CD4-positive, alpha-beta memory T cell (primary cell): ENCODE measurements at regions of chr12 and their contacts with region 1.

Region 1: DNA sequence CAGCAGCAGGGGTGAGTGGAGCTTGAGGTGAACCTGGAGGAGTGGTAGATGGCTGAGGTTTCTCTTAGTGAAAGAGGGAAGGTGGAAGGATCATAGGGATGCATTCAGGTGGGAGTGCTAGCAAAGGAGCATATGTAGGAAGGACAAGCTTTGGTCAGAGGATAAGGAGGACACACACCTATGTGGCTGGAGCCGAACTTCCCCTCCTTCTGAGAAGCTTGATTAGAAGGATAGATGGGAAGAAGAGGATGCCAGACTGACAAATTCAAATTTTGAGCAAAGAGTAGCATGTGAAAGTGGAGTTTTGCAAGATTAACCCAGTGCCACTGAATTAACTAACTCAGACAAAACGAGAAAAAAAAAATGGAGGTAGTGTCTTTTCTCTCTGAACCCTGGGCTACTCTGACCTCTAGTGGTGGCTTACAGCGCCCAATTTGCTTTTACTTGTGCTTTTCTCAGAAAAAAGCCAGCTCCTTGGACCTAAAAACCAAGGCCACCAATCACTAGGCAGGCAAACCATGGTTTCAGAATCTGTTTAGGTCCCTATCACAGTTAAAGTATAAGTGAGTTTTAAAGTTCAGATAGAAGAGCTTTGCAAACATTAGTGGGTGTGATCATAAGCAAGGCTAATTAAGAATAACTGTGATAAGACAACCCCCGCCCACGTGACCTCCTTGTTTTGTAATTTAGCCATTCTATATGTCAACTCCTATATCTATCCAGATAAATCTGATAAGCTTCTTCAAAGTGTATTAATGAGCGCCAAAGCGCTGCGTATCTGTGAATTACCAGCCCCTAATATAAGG is 15.5 kb downstream of the EMP1 start:
- DNase-seq: peak; percentile 73 to 78 (median 76)
- H3K4me3 ChIP-seq: no peak overlapping the region
- H3K4me3 Mint-ChIP-seq: peak overlapping the region; percentile 12 to 80 (median 47)
- H3K27ac ChIP-seq: no peak overlapping the region
- H3K27ac Mint-ChIP-seq: peak overlapping the region in 6 of 7 donors; percentile 19 to 91 (median 79)
- H3K4me1 ChIP-seq: peaks cover 10% of the 10 kb centered on the region
- H3K4me1 Mint-ChIP-seq: peaks cover 5 to 13% (median 7%) of the 10 kb centered on the region in 4 donors
- H3K27me3 ChIP-seq: no peaks in the 10 kb centered on the region
- H3K27me3 Mint-ChIP-seq: no peaks in the 10 kb centered on the region

Region 2: GRCh38 chr12:12786716-12787601 is 425.1 kb before region 1 on chr12:
- CTCF ChIA-PET with region 1: interaction called, 19 read pairs
- POLR2A ChIA-PET with region 1: interaction called, 3 read pairs
- intact Hi-C with region 1: loop called (anchors 1 kb)
- DNase-seq: peak; percentile 73 to 78 (median 76)
- H3K4me3 ChIP-seq: peak overlapping the region; percentile 75 to 81
- H3K4me3 Mint-ChIP-seq: peak overlapping the region; percentile 80 to 92 (median 88)
- H3K27ac ChIP-seq: peak overlapping the region; percentile 65
- H3K27ac Mint-ChIP-seq: peak overlapping the region; percentile 48 to 90 (median 85)
- H3K4me1 ChIP-seq: peaks cover 27% of the 10 kb centered on the region
- H3K4me1 Mint-ChIP-seq: peaks cover 4 to 30% (median 10%) of the 10 kb centered on the region in 4 donors
- H3K27me3 ChIP-seq: no peaks in the 10 kb centered on the region
- H3K27me3 Mint-ChIP-seq: no peaks in the 10 kb centered on the region

Region 3: DNA sequence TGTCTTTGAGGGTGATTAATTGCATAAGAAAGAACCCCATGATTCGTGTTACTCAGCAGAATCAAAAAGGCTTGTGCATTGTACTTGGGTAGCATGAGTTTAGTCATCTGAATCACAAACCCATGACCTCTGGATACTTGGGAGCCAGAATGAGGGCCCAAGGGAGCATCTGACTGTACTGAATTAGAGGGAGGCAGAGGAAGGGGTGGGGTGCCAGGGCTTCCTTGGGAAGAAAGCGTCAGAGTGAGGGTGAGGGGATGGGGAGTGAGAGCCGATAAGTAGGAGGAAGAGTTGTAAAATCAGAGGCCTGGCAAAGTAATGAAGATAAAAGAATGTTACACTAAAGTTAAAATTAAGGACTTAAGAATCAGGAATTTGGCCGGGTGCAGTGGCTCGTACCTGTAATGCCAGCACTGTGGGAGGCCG is 289.9 kb before region 1 on chr12:
- CTCF ChIA-PET with region 1: interaction called, 179 read pairs
- POLR2A ChIA-PET with region 1: interaction called, 3 read pairs
- intact Hi-C with region 1: no loop called
- DNase-seq: no peak
- H3K4me3 ChIP-seq: no peak overlapping the region
- H3K4me3 Mint-ChIP-seq: no peak overlapping the region
- H3K27ac ChIP-seq: no peak overlapping the region
- H3K27ac Mint-ChIP-seq: peak overlapping the region in 1 of 7 donors; percentile 29
- H3K4me1 ChIP-seq: no peaks in the 10 kb centered on the region
- H3K4me1 Mint-ChIP-seq: no peaks in the 10 kb centered on the region
- H3K27me3 ChIP-seq: no peaks in the 10 kb centered on the region
- H3K27me3 Mint-ChIP-seq: peaks cover 8 to 9% of the 10 kb centered on the region in 2 donors

Region 4: GRCh38 chr12:13044002-13044905 is 167.8 kb before region 1 on chr12 and contains the start of gene FAM234B:
- CTCF ChIA-PET with region 1: interaction called, 23 read pairs
- POLR2A ChIA-PET with region 1: no interaction called
- intact Hi-C with region 1: no loop called
- DNase-seq: peak; percentile 57 to 68 (median 59)
- H3K4me3 ChIP-seq: peak within 1 kb of the TSS; percentile 42 to 84
- H3K4me3 Mint-ChIP-seq: peak within 1 kb of the TSS; percentile 82 to 89 (median 87)
- H3K27ac ChIP-seq: peak within 1 kb of the TSS; percentile 43
- H3K27ac Mint-ChIP-seq: peak within 1 kb of the TSS in 6 of 7 donors; percentile 36 to 88 (median 72)
- H3K4me1 ChIP-seq: peaks cover 13% of the 10 kb centered on the region
- H3K4me1 Mint-ChIP-seq: peaks cover 4 to 9% (median 6%) of the 10 kb centered on the region in 4 donors
- H3K27me3 ChIP-seq: no peaks in the 10 kb centered on the region
- H3K27me3 Mint-ChIP-seq: peaks cover 0 to 9% of the 10 kb centered on the region in 2 donors
- total RNA-seq, gene FAM234B: 3.9 to 4.0 TPM

Region 5: DNA sequence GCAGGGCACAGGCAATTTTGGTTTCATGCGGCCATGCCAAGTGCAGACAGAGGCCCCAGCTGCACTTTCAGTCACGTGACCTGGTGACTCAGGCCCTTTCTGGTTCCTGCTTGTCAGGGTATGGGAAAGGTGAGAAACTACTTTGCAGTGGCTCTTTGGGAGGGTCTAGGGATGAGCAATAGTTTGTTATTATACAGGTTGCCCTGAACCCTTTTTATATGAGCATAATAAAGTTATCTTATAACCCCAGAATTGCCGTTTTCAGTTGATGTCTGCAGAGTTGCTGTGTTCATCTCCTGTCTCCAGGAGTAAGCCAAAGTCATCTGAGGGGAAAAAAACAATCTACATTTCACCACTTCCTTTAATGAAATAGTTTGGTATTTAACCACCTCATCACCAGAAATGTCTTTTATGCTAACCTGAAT is 46.4 kb before region 1 on chr12:
- CTCF ChIA-PET with region 1: interaction called, 11 read pairs
- POLR2A ChIA-PET with region 1: no interaction called
- intact Hi-C with region 1: no loop called
- DNase-seq: peak; percentile 51 to 80 (median 55)
- H3K4me3 ChIP-seq: peak overlapping the region in 1 of 2 donors; percentile 19
- H3K4me3 Mint-ChIP-seq: peak overlapping the region in 6 of 8 donors; percentile 19 to 68 (median 45)
- H3K27ac ChIP-seq: no peak overlapping the region
- H3K27ac Mint-ChIP-seq: peak overlapping the region in 6 of 7 donors; percentile 26 to 77 (median 62)
- H3K4me1 ChIP-seq: peaks cover 23% of the 10 kb centered on the region
- H3K4me1 Mint-ChIP-seq: peaks cover 15 to 30% (median 21%) of the 10 kb centered on the region in 4 donors
- H3K27me3 ChIP-seq: no peaks in the 10 kb centered on the region
- H3K27me3 Mint-ChIP-seq: peaks cover 2 to 4% of the 10 kb centered on the region in 2 donors

Region 6: GRCh38 chr12:13196130-13196921 is 15.7 kb before region 1 on chr12 and contains the start of gene EMP1:
- CTCF ChIA-PET with region 1: interaction called, 34 read pairs
- POLR2A ChIA-PET with region 1: no interaction called
- intact Hi-C with region 1: no loop called
- DNase-seq: peak; percentile 60 to 95 (median 76)
- H3K4me3 ChIP-seq: peak within 1 kb of the TSS in 1 of 2 donors; percentile 54
- H3K4me3 Mint-ChIP-seq: peak within 1 kb of the TSS; percentile 80 to 93 (median 88)
- H3K27ac ChIP-seq: peak within 1 kb of the TSS; percentile 35
- H3K27ac Mint-ChIP-seq: peak within 1 kb of the TSS; percentile 74 to 96 (median 84)
- H3K4me1 ChIP-seq: peaks cover 19% of the 10 kb centered on the region
- H3K4me1 Mint-ChIP-seq: peaks cover 19 to 32% (median 25%) of the 10 kb centered on the region in 4 donors
- H3K27me3 ChIP-seq: no peaks in the 10 kb centered on the region
- H3K27me3 Mint-ChIP-seq: peaks cover under 1 to 3% of the 10 kb centered on the region in 2 donors
- total RNA-seq, gene EMP1: 4.5 to 5.8 TPM

Region 7: DNA sequence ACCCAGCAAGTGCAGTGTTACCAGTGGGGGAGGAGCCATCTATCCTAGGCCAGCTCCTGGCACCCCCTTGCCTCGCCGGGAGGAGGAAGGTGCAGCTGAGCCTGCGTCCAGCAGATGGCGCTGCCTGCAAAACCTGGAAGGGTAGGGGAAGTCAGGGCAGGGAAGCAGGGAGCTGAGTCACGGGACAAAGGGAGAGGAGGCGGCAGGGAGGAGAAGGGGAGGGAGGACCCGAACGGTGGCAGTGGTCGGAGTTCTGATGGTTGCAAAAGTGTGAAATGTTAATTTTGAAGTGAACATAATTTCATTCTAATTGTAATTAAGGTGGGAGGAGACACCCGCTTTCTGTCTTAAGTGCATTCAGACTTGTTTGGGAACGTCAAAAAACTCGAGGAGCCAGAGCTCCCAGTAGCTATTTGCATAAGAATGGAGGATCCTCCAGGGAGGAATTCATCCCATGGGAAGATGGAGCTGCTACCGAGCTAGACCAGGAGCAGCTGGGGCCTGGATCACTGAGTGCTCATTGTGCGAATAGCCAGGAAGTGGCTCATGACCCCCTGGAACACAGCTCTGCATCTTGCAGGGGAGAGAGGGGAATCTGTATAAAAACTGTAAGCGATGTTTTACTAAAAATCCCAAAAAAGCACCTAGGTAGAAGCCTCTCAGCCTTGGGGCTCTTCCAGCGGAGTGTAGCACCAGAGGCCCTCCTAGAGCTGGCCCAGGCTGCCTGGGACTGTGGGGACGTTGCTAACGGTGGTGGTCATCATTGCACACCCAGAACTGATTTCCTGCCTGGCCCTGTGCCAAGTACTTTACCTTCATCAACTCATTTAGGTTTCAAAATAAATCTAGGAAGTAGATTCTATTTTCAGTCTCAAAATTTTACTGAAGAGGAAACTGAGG is 44.0 kb after region 1 on chr12:
- CTCF ChIA-PET with region 1: interaction called, 10 read pairs
- POLR2A ChIA-PET with region 1: no interaction called
- intact Hi-C with region 1: no loop called
- DNase-seq: peak; percentile 57 to 71 (median 61)
- H3K4me3 ChIP-seq: no peak overlapping the region
- H3K4me3 Mint-ChIP-seq: peak overlapping the region in 2 of 8 donors; percentile 34 to 49
- H3K27ac ChIP-seq: no peak overlapping the region
- H3K27ac Mint-ChIP-seq: no peak overlapping the region
- H3K4me1 ChIP-seq: no peaks in the 10 kb centered on the region
- H3K4me1 Mint-ChIP-seq: peaks cover 0 to 3% (median 1%) of the 10 kb centered on the region in 4 donors
- H3K27me3 ChIP-seq: no peaks in the 10 kb centered on the region
- H3K27me3 Mint-ChIP-seq: peaks cover 6 to 12% of the 10 kb centered on the region in 2 donors

Region 8: DNA sequence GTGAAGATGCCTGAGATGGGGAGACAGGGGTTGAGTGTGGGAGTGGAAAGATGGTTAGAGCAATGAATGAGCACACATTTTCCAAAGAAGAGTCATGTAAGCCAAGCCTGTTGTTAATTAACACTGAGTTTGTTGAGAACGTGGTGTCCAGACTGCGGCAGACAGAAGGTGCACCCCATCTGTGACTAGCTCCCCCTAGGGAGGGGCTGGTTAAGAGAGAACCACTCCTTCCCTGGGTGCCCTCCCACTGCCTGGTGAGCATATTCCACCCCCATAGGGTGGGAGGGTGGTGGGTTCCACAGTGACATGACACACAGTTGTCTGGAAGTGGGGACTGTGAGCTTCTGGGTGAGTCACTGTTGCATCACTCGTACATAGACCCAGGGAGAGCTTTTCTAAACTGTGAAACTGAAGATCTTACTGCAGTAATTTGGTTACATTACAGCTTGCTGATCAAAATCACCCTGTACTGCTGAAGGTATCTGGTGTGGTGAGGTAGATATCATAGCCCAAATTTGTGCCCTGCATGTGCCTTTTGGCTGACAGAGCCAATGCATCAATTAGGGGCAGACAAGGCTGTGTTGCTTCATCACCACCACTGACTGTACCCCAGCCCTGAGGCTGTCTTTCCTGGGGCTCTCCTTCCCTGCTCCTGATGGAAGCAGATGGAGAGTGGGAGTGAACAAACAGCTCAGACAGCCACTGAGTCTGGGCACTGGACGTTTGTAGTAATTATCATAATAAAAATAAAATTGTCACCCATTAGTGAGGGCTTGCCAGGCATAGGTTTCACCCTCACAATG is 135.4 kb after region 1 on chr12:
- CTCF ChIA-PET with region 1: no interaction called
- POLR2A ChIA-PET with region 1: no interaction called
- intact Hi-C with region 1: no loop called
- DNase-seq: no peak
- H3K4me3 ChIP-seq: no peak overlapping the region
- H3K4me3 Mint-ChIP-seq: no peak overlapping the region
- H3K27ac ChIP-seq: no peak overlapping the region
- H3K27ac Mint-ChIP-seq: no peak overlapping the region
- H3K4me1 ChIP-seq: no peaks in the 10 kb centered on the region
- H3K4me1 Mint-ChIP-seq: no peaks in the 10 kb centered on the region
- H3K27me3 ChIP-seq: no peaks in the 10 kb centered on the region
- H3K27me3 Mint-ChIP-seq: peaks cover 18 to 31% of the 10 kb centered on the region in 2 donors